GM12878 (cell line): ENCODE measurements at regions of chr15 and their contacts with region 1.

Region 1: DNA sequence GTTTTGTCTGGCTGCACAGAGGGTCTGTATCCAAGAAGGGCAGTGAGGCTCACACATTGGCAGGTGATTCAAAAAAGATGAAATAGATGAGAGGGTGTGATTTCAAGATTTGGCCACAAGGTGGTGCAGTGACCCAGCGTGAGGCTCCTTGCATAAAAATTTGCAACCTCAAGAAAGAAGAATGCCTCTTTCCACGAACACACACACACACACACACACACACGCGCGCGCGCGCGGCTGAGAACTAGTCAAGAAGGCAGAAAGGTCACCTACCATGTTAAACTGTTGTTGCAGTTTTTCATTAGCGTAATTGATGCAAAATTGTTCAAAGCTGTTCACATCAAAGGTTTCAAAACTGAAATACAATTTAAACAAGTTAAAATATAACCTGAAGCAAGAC is 39.2 kb downstream of the MYO5C start:
- DNase-seq: peak; percentile 76
- ATAC-seq: peak; percentile 71
- H3K4me3 ChIP-seq: no peak overlapping the region
- H3K27ac ChIP-seq: no peak overlapping the region
- H3K4me1 ChIP-seq: peaks cover 12% of the 10 kb centered on the region
- H3K27me3 ChIP-seq: no peaks in the 10 kb centered on the region
- CTCF ChIP-seq: peak; percentile 68 to 82 (median 71)
- EP300 ChIP-seq: no peak
- POLR2A ChIP-seq: no peak
- RAD21 ChIP-seq: peak; percentile 88

Region 2: DNA sequence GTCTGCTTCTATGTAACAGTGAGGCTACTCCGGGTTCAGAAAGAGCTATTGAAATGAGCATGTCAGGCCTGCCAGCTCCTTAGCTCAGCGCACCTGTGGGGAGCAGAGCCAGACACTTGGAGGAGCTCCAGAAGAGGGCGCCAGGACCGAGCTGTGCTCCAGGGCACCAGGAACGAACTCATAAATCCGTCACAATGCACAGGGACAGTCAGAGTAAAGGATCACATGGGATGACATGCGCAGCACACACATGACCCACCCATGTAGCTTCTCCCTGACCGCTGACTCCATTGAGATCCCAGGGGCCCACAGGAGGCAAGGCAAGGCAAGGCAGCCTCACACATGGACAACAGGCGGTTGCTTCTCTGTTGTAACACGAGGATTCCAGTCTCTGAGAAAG is 39.2 kb before region 1 on chr15:
- CTCF ChIA-PET with region 1: interaction called, 10 read pairs
- POLR2A ChIA-PET with region 1: no interaction called
- RAD21 ChIA-PET with region 1: interaction called, 5 read pairs
- SMC1A ChIA-PET with region 1: interaction called, 5 read pairs
- in situ Hi-C with region 1: no loop called
- intact Hi-C with region 1: no loop called
- DNase-seq: no peak
- ATAC-seq: peak; percentile 74
- H3K4me3 ChIP-seq: no peak overlapping the region
- H3K27ac ChIP-seq: no peak overlapping the region
- H3K4me1 ChIP-seq: peaks cover 15% of the 10 kb centered on the region
- H3K27me3 ChIP-seq: no peaks in the 10 kb centered on the region
- CTCF ChIP-seq: peak; percentile 57 to 73 (median 58)
- EP300 ChIP-seq: no peak
- POLR2A ChIP-seq: no peak
- RAD21 ChIP-seq: peak; percentile 43; the same call in 1 of the 2 replicates

Region 3: GRCh38 chr15:52233405-52233804 is 23.0 kb before region 1 on chr15:
- CTCF ChIA-PET with region 1: interaction called, 18 read pairs
- POLR2A ChIA-PET with region 1: no interaction called
- RAD21 ChIA-PET with region 1: interaction called, 11 read pairs
- SMC1A ChIA-PET with region 1: interaction called, 20 read pairs
- in situ Hi-C with region 1: no loop called
- intact Hi-C with region 1: no loop called
- DNase-seq: no peak
- ATAC-seq: peak; percentile 79
- H3K4me3 ChIP-seq: peak overlapping the region; percentile 7; the same call in 1 of the 2 replicates
- H3K27ac ChIP-seq: peak overlapping the region; percentile 49
- H3K4me1 ChIP-seq: peaks cover 56% of the 10 kb centered on the region
- H3K27me3 ChIP-seq: no peaks in the 10 kb centered on the region
- CTCF ChIP-seq: no peak
- EP300 ChIP-seq: no peak
- POLR2A ChIP-seq: no peak
- RAD21 ChIP-seq: no peak

Region 4: DNA sequence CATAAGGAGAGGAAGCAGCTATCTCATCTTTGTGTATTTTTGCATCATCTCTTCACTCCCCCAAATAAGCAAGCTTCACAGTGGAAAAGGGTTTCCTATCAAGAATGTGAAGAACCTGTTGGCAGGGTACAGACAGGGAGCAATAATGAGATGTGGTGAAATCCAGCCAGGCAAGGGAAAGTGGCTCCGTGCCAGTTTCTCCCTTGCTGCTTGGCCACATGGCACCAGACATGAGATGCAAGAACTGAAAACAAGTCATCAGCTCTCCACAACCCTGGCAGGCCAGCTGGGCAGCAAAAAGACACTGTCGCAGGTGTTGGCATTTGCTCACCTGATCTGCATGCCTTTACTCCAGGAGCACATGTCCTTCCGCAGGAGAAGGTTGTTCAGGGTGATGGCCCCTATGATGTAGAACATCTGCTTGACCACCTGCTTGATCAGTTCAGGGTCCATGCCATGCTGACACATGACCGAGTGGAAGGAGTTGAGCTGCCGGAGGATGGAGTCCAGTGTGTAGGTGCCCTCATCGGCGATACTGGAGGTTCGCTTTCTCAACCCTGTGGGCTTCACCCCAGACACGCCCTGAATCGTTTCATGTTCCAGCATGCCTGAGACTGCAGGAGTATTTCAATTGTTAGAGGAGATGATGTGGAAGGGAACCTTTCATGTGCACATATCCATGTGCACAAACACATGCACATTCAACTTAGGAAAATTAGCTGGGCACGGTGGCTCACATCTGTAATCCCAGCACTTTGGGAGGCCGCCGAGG is 62.5 kb after region 1 on chr15:
- CTCF ChIA-PET with region 1: interaction called, 14 read pairs
- POLR2A ChIA-PET with region 1: no interaction called
- RAD21 ChIA-PET with region 1: interaction called, 9 read pairs
- SMC1A ChIA-PET with region 1: interaction called, 5 read pairs
- in situ Hi-C with region 1: no loop called
- intact Hi-C with region 1: no loop called
- DNase-seq: no peak
- ATAC-seq: no peak
- H3K4me3 ChIP-seq: no peak overlapping the region
- H3K27ac ChIP-seq: no peak overlapping the region
- H3K4me1 ChIP-seq: no peaks in the 10 kb centered on the region
- H3K27me3 ChIP-seq: no peaks in the 10 kb centered on the region
- CTCF ChIP-seq: no peak
- EP300 ChIP-seq: no peak
- POLR2A ChIP-seq: no peak
- RAD21 ChIP-seq: no peak

Region 5: DNA sequence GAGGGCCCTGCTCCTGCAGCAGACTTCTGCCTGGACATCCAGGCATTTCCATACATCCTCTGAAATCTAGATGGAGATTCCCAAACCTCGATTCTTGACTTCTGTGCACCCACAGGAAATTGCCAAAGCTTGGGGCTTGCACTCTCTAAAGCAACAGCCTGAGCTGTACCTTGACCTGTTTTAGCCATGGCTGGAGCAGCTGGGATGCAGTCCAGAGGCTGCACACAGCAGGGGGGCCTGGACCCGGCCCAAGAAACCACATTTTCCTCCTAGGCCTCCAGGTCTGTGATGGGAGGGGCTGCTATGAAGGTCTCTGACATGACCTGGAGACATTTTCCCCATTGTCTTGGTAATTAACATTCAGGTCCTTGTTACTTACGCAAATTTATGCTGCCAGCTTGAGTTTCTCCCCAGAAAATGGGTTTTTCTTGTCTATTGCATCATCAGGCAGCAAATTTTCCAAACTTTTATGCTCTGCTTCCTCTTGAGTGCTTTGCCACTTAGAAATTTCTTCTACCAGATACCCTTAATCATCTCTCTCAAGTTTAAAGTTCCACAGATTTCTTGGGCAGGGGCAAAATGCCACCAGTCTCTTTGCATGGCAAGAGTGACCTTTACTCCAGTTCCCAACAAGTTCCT is 284.1 kb after region 1 on chr15:
- CTCF ChIA-PET with region 1: no interaction called
- POLR2A ChIA-PET with region 1: no interaction called
- RAD21 ChIA-PET with region 1: no interaction called
- SMC1A ChIA-PET with region 1: no interaction called
- in situ Hi-C with region 1: no loop called
- intact Hi-C with region 1: no loop called
- DNase-seq: no peak
- ATAC-seq: no peak
- H3K4me3 ChIP-seq: no peak overlapping the region
- H3K27ac ChIP-seq: no peak overlapping the region
- H3K4me1 ChIP-seq: no peaks in the 10 kb centered on the region
- H3K27me3 ChIP-seq: no peaks in the 10 kb centered on the region
- CTCF ChIP-seq: no peak
- EP300 ChIP-seq: no peak
- POLR2A ChIP-seq: no peak
- RAD21 ChIP-seq: no peak

Region 6: DNA sequence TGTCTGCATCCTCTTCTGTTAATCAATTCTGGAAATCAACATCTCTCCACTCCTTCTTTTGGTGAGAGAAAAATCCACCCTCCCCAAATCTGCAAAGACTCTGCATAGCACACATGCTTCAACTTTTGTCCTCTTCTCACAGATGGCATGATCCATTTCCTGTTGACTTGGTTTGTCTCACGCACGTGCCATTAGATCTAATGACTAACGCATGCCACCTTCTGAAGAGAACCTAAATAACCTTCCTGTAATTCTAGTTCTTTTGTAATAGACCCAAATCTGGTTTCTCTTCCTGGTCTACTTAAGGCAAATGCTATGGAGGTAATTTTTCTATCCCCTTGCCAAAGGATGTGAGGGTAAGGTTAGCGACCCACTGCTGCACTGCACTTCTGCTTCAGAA is 473.8 kb after region 1 on chr15:
- CTCF ChIA-PET with region 1: interaction called, 191 read pairs
- POLR2A ChIA-PET with region 1: no interaction called
- RAD21 ChIA-PET with region 1: interaction called, 121 read pairs
- SMC1A ChIA-PET with region 1: interaction called, 143 read pairs
- in situ Hi-C with region 1: loop called (anchors 5 kb)
- intact Hi-C with region 1: loop called (anchors 1 kb)
- DNase-seq: peak; percentile 28
- ATAC-seq: peak; percentile 80
- H3K4me3 ChIP-seq: no peak overlapping the region; the same call in 1 of the 2 replicates
- H3K27ac ChIP-seq: no peak overlapping the region
- H3K4me1 ChIP-seq: peaks cover 9% of the 10 kb centered on the region; the same call in 1 of the 2 replicates
- H3K27me3 ChIP-seq: no peaks in the 10 kb centered on the region
- CTCF ChIP-seq: 0 out of 6 replicates have a peak, but pooled peaks of 1 of the 3 experiments have one; percentile 6
- EP300 ChIP-seq: no peak
- POLR2A ChIP-seq: no peak
- RAD21 ChIP-seq: peak; percentile 36; the same call in 1 of the 2 replicates

Region 7: GRCh38 chr15:52780172-52780980 is 524.0 kb after region 1 on chr15:
- CTCF ChIA-PET with region 1: interaction called, 3 read pairs
- POLR2A ChIA-PET with region 1: no interaction called
- RAD21 ChIA-PET with region 1: no interaction called
- SMC1A ChIA-PET with region 1: interaction called, 13 read pairs
- in situ Hi-C with region 1: no loop called
- intact Hi-C with region 1: no loop called
- DNase-seq: peak; percentile 39
- ATAC-seq: peak; percentile 77
- H3K4me3 ChIP-seq: no peak overlapping the region; the same call in 1 of the 2 replicates
- H3K27ac ChIP-seq: no peak overlapping the region
- H3K4me1 ChIP-seq: peaks cover 9% of the 10 kb centered on the region
- H3K27me3 ChIP-seq: peaks cover 13 to 17% of the 10 kb centered on the region in 2 experiments
- CTCF ChIP-seq: peak; percentile 82 to 97 (median 85)
- EP300 ChIP-seq: peak; percentile 85 to 97
- POLR2A ChIP-seq: no peak
- RAD21 ChIP-seq: peak; percentile 80